ENCODE measurements at regions of chr6 and their contacts with region 1.

Region 1: DNA sequence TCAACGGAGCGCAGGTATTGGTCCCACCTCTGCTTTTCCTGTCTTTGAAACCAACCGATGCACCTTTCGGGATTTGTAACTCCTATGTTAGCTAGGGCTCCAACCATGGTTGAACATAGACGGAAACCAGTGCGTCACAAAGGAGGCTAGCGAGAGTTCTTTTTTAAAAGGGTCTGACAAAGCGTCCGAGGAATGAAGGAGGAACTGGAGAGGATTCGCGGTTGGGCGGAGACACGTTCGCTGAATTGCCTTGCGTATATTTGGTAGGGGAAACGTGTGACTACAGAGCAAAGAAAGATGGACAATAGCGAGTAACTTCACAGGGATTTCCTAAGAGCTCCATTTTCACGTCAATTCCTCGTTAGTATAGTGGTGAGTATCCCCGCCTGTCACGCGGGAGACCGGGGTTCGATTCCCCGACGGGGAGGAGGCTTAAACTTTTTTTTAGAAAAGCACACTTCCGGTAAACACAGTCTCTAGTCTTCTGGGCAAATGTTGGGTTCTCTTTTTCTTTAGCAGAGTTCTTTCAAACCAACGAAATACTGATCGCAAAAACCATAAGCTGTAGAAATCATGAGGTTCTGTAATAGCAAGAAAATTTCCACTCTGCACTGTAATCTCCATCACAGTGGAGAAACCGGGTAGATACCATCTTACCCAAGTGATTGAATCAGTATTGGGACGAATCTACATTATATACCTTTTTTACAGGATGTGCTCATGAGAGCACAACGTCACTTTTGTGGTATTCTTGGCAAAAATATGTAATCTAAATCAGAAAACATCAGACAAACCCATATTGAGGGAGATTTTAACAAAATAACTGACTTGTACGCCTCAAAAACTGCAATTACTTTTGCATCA is 6.6 kb upstream of the ZNF184 start:
- DNase-seq: peak; percentile 84
- ATAC-seq: peak; percentile 76
- H3K4me3 Mint-ChIP-seq: no peak overlapping the region
- H3K27ac Mint-ChIP-seq: no peak overlapping the region
- H3K4me1 Mint-ChIP-seq: peaks cover 9% of the 10 kb centered on the region
- H3K27me3 Mint-ChIP-seq: no peaks in the 10 kb centered on the region
- CTCF ChIP-seq: no peak

Region 2: GRCh38 chr6:27312146-27312949 is 167.2 kb before region 1 on chr6 and contains the start of gene POM121L2:
- CTCF ChIA-PET with region 1: no interaction called
- POLR2A ChIA-PET with region 1: no interaction called
- intact Hi-C with region 1: loop called (anchors 2 kb)
- DNase-seq: peak; percentile 53
- ATAC-seq: peak; percentile 71
- H3K4me3 Mint-ChIP-seq: peak within 1 kb of the TSS; percentile 82
- H3K27ac Mint-ChIP-seq: no peak within 1 kb of the TSS
- H3K4me1 Mint-ChIP-seq: peaks cover 12% of the 10 kb centered on the region
- H3K27me3 Mint-ChIP-seq: peaks cover 66% of the 10 kb centered on the region
- CTCF ChIP-seq: no peak
- total RNA-seq, gene POM121L2: not detected in 2 replicates

Region 3: DNA sequence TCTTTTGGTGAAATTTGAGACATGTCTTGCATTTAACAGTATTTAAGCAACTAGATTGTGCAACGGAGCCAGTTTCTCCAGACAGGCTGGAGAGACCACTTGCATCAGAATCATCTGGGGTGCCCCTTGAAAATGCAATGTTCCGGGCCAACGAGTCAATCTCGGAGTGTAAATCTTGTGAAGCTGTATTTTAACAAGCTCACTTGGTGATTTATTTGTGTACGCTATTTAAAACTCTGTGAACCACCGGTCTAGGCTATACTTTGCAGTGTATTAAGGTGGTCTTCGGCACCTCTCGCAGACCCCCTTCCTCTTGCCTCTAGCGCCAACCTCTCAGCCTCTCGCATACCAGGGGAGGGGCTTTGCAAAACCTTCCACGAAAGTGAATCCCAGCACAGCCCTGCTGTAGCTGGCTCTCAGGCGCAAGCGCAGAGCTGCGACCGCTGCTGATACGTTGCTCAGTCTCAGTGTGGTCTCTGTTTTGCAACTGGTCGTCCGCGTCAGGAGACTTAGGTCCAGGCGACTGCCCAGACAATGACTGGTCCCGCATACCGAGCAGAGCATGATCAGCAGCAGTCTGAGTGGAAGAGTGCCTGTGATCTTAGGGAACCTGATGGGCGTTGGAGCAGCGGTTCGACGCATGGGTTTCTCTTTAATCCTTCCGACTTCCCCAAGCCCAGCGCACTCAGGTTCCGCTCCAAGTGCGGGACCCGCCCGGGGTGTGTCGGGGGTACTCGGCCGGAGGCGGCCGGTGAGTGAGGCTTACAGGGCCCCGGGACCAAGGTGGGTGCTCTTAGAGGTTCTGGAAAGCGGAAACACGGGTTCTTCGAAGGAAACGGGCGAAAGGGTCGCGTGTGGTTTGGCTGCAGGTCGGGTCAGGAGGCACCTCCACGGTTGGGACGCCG is 91.0 kb before region 1 on chr6 and contains the start of gene ZNF391:
- CTCF ChIA-PET with region 1: no interaction called
- POLR2A ChIA-PET with region 1: interaction called, 10 read pairs
- intact Hi-C with region 1: loop called (anchors 1 kb)
- DNase-seq: peak; percentile 73
- ATAC-seq: peak; percentile 88
- H3K4me3 Mint-ChIP-seq: peak within 1 kb of the TSS; percentile 97
- H3K27ac Mint-ChIP-seq: peak within 1 kb of the TSS; percentile 95
- H3K4me1 Mint-ChIP-seq: peaks cover 13% of the 10 kb centered on the region
- H3K27me3 Mint-ChIP-seq: no peaks in the 10 kb centered on the region
- CTCF ChIP-seq: no peak
- total RNA-seq, gene ZNF391: 4.8 and 5.9 TPM in 2 replicates

Region 4: GRCh38 chr6:27495386-27496135 is 16.0 kb after region 1 on chr6:
- CTCF ChIA-PET with region 1: no interaction called
- POLR2A ChIA-PET with region 1: interaction called, 5 read pairs
- intact Hi-C with region 1: loop called (anchors 1 kb)
- DNase-seq: no peak
- ATAC-seq: peak; percentile 34
- H3K4me3 Mint-ChIP-seq: peak overlapping the region; percentile 79
- H3K27ac Mint-ChIP-seq: peak overlapping the region; percentile 69
- H3K4me1 Mint-ChIP-seq: peaks cover 16% of the 10 kb centered on the region
- H3K27me3 Mint-ChIP-seq: peaks cover 41% of the 10 kb centered on the region
- CTCF ChIP-seq: no peak

Region 5: GRCh38 chr6:27503436-27504030 is 24.0 kb after region 1 on chr6:
- CTCF ChIA-PET with region 1: no interaction called
- POLR2A ChIA-PET with region 1: interaction called, 13 read pairs
- intact Hi-C with region 1: loop called (anchors 1 kb)
- DNase-seq: peak; percentile 61
- ATAC-seq: peak; percentile 39
- H3K4me3 Mint-ChIP-seq: peak overlapping the region; percentile 87
- H3K27ac Mint-ChIP-seq: peak overlapping the region; percentile 77
- H3K4me1 Mint-ChIP-seq: peaks cover 35% of the 10 kb centered on the region
- H3K27me3 Mint-ChIP-seq: peaks cover 12% of the 10 kb centered on the region
- CTCF ChIP-seq: no peak

Region 6: DNA sequence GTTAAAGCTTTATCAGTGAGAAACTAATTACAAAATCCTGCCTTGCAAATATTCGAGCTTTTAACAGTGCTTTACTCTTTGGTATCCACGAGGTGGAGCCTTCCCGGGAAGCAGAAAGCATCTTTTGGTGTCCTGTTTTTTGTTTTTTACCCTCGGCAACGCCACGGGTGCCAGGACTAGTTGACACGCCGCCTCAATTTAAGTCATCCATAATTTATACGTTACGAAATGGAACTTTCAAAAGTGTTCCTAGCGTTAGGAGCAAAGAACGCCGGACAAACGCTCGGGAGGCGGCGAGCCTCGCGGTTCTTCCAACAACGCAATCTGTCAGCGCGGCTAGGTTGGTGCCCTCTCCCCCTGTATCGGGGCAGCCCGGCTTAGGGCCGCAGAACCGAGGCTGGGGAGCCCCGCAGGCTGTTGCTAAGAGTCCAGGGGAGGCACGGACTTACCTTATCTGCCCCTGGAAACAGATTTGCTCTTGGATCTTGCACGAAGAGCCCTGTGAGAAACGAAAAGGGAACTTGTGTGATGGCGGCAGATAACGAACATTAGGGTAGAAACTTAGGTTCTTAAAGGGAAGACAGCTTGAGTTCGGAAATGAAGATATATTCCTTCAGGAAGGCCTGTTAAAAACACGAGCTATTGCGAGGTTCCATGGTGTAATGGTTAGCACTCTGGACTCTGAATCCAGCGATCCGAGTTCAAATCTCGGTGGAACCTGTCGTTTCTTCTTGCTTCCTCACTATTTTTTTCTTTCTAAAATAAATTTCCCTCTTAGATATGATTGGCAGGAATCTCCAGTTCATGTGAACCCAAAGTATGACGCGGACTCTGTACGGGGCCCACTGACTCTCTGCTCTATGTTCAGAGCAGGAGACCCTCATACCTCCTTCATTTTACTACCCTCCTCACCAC is 39.6 kb after region 1 on chr6:
- CTCF ChIA-PET with region 1: interaction called, 13 read pairs
- POLR2A ChIA-PET with region 1: interaction called, 11 read pairs
- intact Hi-C with region 1: loop called (anchors 2 kb)
- DNase-seq: peak; percentile 48
- ATAC-seq: peak; percentile 72
- H3K4me3 Mint-ChIP-seq: peak overlapping the region; percentile 83
- H3K27ac Mint-ChIP-seq: peak overlapping the region; percentile 82
- H3K4me1 Mint-ChIP-seq: peaks cover 15% of the 10 kb centered on the region
- H3K27me3 Mint-ChIP-seq: peaks cover 30% of the 10 kb centered on the region
- CTCF ChIP-seq: no peak

Region 7: GRCh38 chr6:28235912-28236452 is 756.4 kb after region 1 on chr6:
- CTCF ChIA-PET with region 1: no interaction called
- POLR2A ChIA-PET with region 1: no interaction called
- intact Hi-C with region 1: no loop called
- DNase-seq: no peak
- ATAC-seq: no peak
- H3K4me3 Mint-ChIP-seq: no peak overlapping the region
- H3K27ac Mint-ChIP-seq: no peak overlapping the region
- H3K4me1 Mint-ChIP-seq: no peaks in the 10 kb centered on the region
- H3K27me3 Mint-ChIP-seq: no peaks in the 10 kb centered on the region
- CTCF ChIP-seq: no peak

Region 8: DNA sequence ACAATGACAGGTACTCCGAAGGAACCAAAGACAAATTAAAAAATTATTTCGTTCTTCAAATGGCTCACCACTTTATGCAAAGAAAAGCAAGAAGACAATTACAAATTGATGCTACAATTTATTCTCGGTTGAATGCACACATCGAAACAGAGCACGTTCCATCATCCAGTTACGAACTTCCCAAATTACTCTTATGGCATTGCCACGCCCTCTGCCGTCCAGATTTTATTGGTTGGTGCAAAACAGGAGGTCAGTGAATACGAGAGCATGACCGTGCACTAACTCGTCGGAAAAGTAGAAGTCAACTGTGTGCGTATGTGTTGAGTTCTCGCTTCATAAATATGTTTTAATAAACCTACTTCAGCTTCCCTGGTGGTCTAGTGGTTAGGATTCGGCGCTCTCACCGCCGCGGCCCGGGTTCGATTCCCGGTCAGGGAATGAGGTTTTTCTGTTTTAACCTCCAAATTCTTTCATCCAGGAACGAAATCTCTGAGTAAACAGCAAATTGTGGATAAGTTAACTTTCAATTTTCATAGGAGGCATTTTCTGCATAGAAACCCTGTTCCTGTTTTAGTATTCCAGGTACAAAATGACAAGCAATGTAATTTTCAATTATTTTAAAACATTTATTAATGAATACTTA is 1502.4 kb after region 1 on chr6:
- CTCF ChIA-PET with region 1: no interaction called
- POLR2A ChIA-PET with region 1: no interaction called
- intact Hi-C with region 1: loop called (anchors 2 kb)
- DNase-seq: peak; percentile 65
- ATAC-seq: peak; percentile 61
- H3K4me3 Mint-ChIP-seq: peak overlapping the region; percentile 89
- H3K27ac Mint-ChIP-seq: peak overlapping the region; percentile 97
- H3K4me1 Mint-ChIP-seq: peaks cover 50% of the 10 kb centered on the region
- H3K27me3 Mint-ChIP-seq: peaks cover 32% of the 10 kb centered on the region
- CTCF ChIP-seq: no peak